Activated naive CD4-positive, alpha-beta T cell treated with anti-CD3 and anti-CD28 coated beads, Interleukin-2, amount 10 ng/mL, durations not matched to agents 7 days and 5 days (primary cell): ENCODE measurements at regions of chr14 and their contacts with region 1.

Region 1: DNA sequence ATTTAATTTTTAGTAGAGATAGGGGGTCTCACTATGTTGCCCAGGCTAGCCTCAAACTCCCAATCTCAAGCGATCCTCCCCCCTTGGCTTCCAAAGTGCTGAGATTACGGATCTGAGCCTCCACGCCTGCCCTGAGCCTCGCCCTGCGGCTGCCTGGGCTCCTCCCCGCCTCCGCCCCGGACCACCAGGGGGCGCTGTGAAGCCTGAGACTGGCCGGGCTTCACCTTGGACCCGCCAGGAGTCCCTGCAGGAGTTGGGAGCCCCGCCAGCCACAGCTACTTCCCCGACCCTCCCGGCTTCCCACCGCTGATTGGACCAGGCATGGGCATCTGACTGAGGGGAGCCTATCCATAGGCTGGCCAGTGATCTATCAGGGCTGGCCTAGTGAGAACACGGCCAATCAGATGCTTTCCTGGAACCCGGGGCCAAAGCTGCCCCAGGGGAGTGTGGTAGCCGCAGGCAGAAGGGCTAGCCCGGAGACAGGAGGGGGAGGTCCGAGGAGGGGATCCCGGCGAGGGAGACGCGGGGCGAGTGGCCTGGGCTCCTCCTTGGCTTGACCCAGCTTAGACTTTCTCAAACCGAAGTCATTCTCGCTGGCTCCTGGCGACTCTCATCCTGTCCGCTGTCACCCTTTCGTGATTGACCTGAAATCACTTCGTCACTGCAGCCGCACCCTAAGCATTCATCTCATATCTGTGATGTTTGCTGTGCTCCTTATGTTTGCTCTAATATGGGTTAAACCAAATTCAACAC is 15.1 kb upstream of the ANKRD9 start:
- DNase-seq: peak; percentile 95
- H3K4me3 Mint-ChIP-seq: peak overlapping the region; percentile 81
- H3K27ac Mint-ChIP-seq: peak overlapping the region; percentile 88
- H3K4me1 Mint-ChIP-seq: peaks cover 36% of the 10 kb centered on the region
- H3K27me3 Mint-ChIP-seq: peaks cover 13% of the 10 kb centered on the region

Region 2: DNA sequence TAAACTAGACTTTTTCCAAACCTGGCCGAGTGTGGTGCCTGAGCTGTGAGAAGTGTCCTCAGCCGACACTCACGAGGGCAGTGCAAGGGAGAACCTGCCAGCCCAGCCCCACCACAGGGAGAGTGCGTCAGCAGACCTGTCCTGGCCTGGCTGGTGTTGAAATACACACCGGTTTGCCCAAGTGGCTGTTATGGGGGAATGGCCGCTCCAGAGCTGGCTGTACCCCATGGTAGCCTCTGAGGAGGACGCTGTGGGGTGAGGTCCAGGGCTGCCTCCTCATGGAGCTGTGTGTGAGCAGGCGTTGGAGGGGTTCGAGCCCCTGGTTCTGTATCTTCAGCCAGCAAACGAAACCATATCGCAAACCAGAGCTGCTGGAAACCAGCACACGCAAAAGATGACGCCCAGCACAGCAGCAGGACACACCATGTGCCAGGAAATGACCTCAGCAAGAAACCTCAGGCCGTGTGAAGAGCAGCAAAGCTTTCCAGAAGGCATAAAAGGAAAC is 24.4 kb before region 1 on chr14:
- CTCF ChIA-PET with region 1: interaction called, 10 read pairs
- DNase-seq: peak; percentile 41
- H3K4me3 Mint-ChIP-seq: no peak overlapping the region
- H3K27ac Mint-ChIP-seq: peak overlapping the region; percentile 24
- H3K4me1 Mint-ChIP-seq: peaks cover 10% of the 10 kb centered on the region
- H3K27me3 Mint-ChIP-seq: no peaks in the 10 kb centered on the region

Region 3: DNA sequence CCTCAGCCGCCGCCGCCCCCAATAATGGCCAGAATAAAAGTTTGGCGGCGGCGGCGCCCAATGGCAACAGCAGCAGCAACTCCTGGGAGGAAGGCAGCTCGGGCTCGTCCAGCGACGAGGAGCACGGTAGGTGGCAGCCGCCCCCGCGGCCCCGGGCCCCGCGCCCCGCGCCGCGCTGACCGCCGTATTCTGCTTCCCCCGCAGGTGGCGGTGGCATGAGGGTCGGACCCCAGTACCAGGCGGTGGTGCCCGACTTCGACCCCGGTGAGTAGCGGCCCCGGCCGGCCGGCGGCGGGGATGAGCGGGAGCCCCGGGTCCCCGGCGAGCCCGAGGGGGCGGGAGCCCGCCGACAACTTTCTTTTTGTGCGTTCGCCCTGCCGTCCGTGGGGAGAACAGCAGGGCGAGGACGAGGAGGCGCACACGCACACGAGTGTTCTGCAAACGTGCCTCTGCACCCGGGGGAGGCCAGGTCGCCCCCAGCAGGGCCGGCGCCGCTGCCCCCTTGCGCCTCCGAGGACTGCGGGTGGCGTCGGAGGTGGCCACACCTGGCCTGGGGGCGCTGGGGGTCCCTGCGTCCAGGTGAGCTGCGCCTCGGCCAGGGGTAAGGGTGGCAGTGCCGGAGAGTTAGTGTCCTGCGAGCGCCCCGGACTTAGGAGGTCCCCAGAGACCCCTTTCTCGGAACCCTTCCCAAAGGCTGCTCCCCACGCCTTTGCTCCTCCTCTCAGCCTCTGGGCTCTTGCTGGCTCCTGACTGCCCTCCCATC is 68.6 kb after region 1 on chr14:
- CTCF ChIA-PET with region 1: interaction called, 12 read pairs
- DNase-seq: peak; percentile 72
- H3K4me3 Mint-ChIP-seq: peak overlapping the region; percentile 91
- H3K27ac Mint-ChIP-seq: peak overlapping the region; percentile 76
- H3K4me1 Mint-ChIP-seq: peaks cover 36% of the 10 kb centered on the region
- H3K27me3 Mint-ChIP-seq: peaks cover 15% of the 10 kb centered on the region